AG04450 (cell line): ENCODE measurements at regions of chr4 and their contacts with region 1.

Region 1: GRCh38 chr4:153083447-153083947 is 120.7 kb upstream of the TRIM2 start:
- DNase-seq: peak; percentile 66
- H3K4me3 ChIP-seq: no peak overlapping the region
- H3K27ac ChIP-seq: no peak overlapping the region
- H3K27me3 ChIP-seq: peaks cover 19% of the 10 kb centered on the region
- CTCF ChIP-seq: peak; percentile 70

Region 2: GRCh38 chr4:152843481-152844090 is 239.9 kb before region 1 on chr4:
- CTCF ChIA-PET with region 1: interaction called, 148 read pairs
- POLR2A ChIA-PET with region 1: interaction called, 3 read pairs
- DNase-seq: no peak
- H3K4me3 ChIP-seq: no peak overlapping the region
- H3K27ac ChIP-seq: no peak overlapping the region
- H3K27me3 ChIP-seq: no peaks in the 10 kb centered on the region
- CTCF ChIP-seq: no peak

Region 3: GRCh38 chr4:152850377-152850776 is 233.1 kb before region 1 on chr4:
- CTCF ChIA-PET with region 1: interaction called, 148 read pairs
- POLR2A ChIA-PET with region 1: interaction called, 3 read pairs
- DNase-seq: no peak
- H3K4me3 ChIP-seq: no peak overlapping the region
- H3K27ac ChIP-seq: no peak overlapping the region
- H3K27me3 ChIP-seq: no peaks in the 10 kb centered on the region
- CTCF ChIP-seq: no peak

Region 4: GRCh38 chr4:153095448-153096204 is 12.1 kb after region 1 on chr4:
- CTCF ChIA-PET with region 1: interaction called, 70 read pairs
- POLR2A ChIA-PET with region 1: no interaction called
- DNase-seq: no peak
- H3K4me3 ChIP-seq: no peak overlapping the region
- H3K27ac ChIP-seq: no peak overlapping the region
- H3K27me3 ChIP-seq: peaks cover 14% of the 10 kb centered on the region
- CTCF ChIP-seq: no peak

Region 5: DNA sequence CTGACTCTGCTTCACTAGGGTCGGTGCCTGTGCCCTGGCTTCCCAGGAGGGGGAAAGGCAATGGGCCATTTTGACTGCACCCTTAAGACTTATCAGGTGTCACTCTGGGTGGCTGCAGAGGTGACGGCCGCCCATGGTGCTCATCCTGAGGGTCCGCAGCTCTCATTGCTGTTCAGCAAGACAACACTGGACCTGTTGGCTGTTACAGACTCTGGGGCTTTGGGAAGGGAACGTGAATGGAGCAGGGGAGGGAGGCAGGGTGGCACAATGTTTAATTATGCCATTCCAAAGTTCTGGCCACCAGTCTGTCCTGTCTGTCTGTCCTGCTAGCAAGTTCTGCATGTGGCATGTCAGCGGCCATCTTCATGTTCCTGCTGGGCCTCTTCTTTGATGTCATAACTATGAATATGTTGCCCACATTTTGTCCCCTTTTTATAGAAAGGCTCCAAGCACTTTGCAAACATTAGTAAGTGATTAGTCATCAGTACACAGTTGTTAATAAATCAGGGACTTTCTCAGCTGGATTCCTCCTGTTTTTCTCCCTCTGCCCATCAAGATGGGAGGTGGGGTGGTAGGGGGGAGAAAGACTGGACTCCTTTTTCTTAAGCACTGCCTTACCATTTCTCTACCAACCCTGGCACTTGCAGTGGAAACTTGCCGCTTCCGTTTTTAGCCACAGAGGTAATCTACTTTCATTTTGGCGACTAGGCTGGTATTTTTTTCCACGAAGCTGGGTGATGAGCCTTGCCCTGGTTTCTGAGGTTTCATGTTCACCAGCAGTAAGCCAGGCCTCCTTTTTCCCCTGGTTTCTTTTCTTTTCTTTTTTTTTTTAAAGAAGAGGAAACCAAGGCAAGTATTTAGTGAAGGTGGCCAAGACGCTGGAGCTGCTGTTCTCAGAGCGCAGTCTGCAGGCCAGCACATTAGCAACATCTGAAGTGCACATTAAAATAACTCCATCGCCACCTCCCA is 32.1 kb after region 1 on chr4:
- CTCF ChIA-PET with region 1: interaction called, 12 read pairs
- POLR2A ChIA-PET with region 1: no interaction called
- DNase-seq: no peak
- H3K4me3 ChIP-seq: peak overlapping the region; percentile 25; the same call in 1 of the 2 replicates
- H3K27ac ChIP-seq: peak overlapping the region; percentile 21
- H3K27me3 ChIP-seq: peaks cover 17% of the 10 kb centered on the region
- CTCF ChIP-seq: no peak

Region 6: GRCh38 chr4:153222707-153223426 is 139.4 kb after region 1 on chr4:
- CTCF ChIA-PET with region 1: no interaction called
- POLR2A ChIA-PET with region 1: no interaction called
- DNase-seq: no peak
- H3K4me3 ChIP-seq: peak overlapping the region; percentile 76
- H3K27ac ChIP-seq: peak overlapping the region; percentile 93
- H3K27me3 ChIP-seq: no peaks in the 10 kb centered on the region
- CTCF ChIP-seq: no peak

Region 7: GRCh38 chr4:153643406-153644383 is 560.2 kb after region 1 on chr4:
- CTCF ChIA-PET with region 1: interaction called, 16 read pairs
- POLR2A ChIA-PET with region 1: no interaction called
- DNase-seq: no peak
- H3K4me3 ChIP-seq: no peak overlapping the region
- H3K27ac ChIP-seq: no peak overlapping the region
- H3K27me3 ChIP-seq: no peaks in the 10 kb centered on the region
- CTCF ChIP-seq: peak; percentile 61